ENCODE measurements at regions of chr2 and their contacts with region 1.

Region 1: DNA sequence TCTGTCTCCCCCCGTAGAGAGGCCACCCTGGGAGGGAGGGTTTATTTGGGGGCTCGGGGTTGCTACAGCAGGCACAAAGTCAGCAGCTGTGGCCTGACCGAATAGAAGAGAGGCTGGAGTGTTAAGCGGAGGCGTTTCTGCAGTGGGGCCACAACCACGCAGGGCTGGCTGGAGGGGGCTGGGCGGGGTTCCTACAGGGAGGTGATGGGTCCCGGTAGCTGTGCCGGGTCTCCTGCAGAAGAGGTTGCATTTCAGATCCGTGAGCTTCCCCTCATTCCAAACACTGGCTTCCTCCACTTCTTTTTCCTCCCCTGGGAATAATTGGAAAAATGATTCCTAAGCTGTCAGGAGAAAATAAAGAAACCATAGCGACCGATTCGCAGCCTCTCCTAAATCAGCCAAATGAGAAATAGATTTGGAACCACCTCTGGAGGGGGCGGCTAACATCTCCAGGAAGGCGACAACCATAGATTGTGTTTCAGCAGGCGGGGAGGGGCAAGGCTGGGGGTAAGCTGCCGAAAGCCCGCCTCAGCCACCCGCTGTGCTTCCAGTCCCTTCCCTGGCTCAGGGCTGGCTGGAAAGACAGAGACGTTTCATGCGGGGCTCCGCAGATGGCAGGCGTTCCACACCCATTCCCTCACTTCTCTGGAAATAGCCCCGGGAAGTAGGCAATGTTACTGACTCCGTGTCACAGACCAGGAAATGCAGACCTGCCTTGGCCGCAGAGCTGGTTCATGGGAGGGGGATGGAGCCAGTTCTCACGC is 85.6 kb upstream of the TAF1B start:
- DNase-seq: no peak
- H3K4me3 Mint-ChIP-seq: no peak overlapping the region
- H3K27ac Mint-ChIP-seq: no peak overlapping the region
- H3K4me1 Mint-ChIP-seq: peaks cover 55% of the 10 kb centered on the region
- H3K27me3 Mint-ChIP-seq: peaks cover 59% of the 10 kb centered on the region

Region 2: DNA sequence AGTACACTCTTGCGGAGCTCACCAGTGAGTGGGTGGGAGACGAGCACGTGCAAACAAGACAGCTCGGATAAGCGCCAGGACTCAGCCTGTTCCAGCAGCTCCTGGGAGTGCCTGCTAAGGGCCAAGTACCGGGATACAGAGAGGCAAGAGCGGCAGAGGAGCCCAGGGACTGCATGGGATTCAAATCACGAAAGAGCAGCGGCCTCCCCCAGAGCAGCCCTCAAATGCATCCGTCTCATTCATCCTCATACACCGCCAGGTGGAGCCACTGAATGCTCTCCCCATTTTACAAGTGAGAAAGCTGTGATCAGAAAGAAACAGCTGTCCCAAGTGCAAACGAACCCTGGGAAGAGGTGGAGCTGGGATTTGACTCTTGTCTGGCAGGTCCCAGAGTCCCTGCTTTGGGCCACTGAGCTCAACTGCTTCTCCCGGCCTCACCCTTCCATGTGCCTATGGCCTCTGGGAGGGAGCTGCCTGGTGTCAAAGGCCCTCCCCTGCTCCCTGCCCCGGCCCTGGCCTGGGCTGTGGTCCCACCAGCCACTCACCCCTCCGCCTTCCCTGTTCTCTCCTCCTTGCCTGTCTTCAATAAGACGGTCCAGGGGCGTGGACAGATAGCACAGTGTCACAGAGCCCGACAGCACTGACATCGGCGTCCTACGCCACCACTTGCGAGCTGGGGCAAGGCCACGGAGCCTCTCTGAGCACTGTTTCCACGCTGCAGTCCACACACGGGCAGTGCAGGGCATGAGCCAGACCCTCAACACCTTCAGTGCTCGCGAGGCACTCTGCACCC is 12.8 kb after region 1 on chr2:
- CTCF ChIA-PET with region 1: interaction called, 36 read pairs
- DNase-seq: peak; percentile 73
- H3K4me3 Mint-ChIP-seq: no peak overlapping the region
- H3K27ac Mint-ChIP-seq: peak overlapping the region; percentile 24
- H3K4me1 Mint-ChIP-seq: peaks cover 8% of the 10 kb centered on the region
- H3K27me3 Mint-ChIP-seq: peaks cover 67% of the 10 kb centered on the region

Region 3: DNA sequence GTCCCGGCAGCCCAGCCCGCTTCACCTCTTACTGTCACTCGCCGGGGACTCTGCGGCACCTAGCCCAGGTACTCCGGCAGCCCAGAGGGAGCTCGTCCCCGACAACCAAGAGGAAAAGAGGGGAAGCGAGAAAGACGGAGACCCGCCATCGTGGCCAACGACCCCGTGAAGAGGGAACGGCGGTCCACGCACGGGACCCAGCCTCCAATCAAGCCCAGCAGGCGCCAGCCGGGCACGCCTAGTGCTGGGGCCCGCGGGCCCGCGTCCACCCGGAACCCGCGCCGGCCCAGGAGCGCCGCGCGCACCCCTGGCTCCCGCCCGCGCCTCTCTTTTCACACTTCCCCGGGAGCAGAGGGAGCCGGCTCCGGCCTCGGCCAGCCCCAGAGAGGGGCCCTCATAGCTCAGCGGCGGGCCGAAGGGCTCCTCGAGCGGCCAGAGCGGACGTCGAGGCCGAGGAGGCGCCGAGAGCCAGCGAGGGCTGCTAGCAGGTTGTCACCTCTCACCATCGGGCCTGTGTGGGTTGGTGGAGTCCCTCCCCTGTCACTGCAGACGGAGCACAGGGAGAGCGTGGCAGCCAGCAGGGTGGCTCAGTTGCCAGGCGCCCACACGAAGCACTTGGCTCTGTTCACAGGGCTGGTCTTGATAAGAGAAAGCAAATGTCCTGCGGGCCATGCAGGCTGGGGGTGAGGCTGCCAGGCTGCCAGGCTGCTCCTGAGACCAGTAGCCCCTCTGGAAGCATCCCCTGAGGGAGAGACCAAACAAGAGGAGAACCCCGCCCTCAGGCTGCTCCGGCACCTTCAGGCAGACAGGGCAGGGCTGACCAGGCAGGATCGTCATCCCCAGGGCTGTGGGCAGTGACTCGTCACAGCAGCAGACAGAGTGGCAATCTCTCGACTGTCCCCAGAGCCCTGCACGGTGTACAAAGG is 248.8 kb after region 1 on chr2:
- CTCF ChIA-PET with region 1: no interaction called
- DNase-seq: no peak
- H3K4me3 Mint-ChIP-seq: no peak overlapping the region
- H3K27ac Mint-ChIP-seq: no peak overlapping the region
- H3K4me1 Mint-ChIP-seq: no peaks in the 10 kb centered on the region
- H3K27me3 Mint-ChIP-seq: peaks cover 61% of the 10 kb centered on the region